ENCODE measurements at regions of chr1 and their contacts with region 1.

Region 1: DNA sequence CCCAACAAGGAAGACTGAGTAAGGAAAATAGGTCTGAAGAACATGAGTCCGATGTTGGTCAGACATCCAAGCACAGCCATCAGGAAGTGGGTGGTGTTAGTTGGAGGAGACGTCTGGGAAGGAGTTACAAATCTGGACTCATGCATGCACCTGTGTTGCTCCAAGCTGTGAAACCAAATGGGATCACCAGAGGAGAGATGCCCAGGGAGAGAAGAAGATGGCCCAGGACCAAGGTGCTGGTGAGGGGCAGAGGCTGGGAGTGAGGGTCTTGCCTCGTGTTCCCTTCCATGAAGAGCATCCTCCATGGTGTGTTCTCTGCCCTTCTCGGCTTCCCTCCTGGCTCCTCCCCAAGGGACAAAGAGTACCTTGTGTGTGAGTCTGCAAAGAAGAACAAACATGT is 405.6 kb downstream of the NPHP4 start:
- DNase-seq: no peak
- H3K4me3 ChIP-seq: no peak overlapping the region
- H3K27ac ChIP-seq: no peak overlapping the region
- H3K4me1 ChIP-seq: no peaks in the 10 kb centered on the region
- H3K27me3 ChIP-seq: peaks cover 0 to 16% of the 10 kb centered on the region in 2 donors
- CTCF ChIP-seq: no peak
- POLR2A ChIP-seq: no peak

Region 2: GRCh38 chr1:4298361-4299083 is 1288.1 kb before region 1 on chr1:
- intact Hi-C with region 1: loop called (anchors 5 kb)
- DNase-seq: no peak
- H3K4me3 ChIP-seq: no peak overlapping the region
- H3K27ac ChIP-seq: no peak overlapping the region
- H3K4me1 ChIP-seq: no peaks in the 10 kb centered on the region
- H3K27me3 ChIP-seq: no peaks in the 10 kb centered on the region
- CTCF ChIP-seq: no peak
- POLR2A ChIP-seq: no peak

Region 3: DNA sequence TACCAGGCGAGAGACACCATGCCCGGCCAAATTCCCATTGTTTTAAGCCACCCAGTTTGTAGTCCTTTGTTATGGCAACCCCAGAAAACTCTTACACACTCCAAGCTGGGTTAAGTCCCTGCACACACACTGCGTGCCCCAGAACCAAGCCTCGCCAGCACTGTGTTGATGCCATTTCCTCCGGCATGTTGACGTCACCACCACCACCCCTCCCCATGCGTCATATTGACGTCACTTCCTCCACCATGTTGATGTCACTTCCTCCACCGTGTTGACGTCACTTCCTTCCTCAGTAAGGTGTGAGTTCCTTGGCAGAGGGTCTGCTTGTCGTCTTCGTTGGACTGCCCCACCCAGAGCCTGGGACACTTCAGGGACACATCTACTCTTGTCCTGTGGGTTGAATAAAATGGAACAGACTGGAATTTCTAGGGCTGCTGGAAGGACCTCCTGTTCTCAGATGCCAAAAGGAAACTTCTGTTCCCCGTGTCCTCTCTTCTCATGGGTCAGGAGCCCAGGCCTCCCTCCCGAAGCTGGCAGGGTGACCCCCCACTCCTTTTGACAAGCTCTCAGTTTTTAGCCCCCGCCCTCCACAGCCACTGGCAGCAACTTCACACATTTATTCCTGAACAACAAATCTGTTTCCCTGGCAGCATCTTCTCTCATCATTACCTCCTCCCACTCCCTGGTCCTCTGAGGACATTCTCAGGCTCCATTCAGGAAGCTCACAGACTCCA is 237.7 kb before region 1 on chr1:
- intact Hi-C with region 1: no loop called
- DNase-seq: no peak
- H3K4me3 ChIP-seq: no peak overlapping the region
- H3K27ac ChIP-seq: no peak overlapping the region
- H3K4me1 ChIP-seq: no peaks in the 10 kb centered on the region
- H3K27me3 ChIP-seq: peaks cover 0 to 7% of the 10 kb centered on the region in 2 donors
- CTCF ChIP-seq: no peak
- POLR2A ChIP-seq: no peak

Region 4: DNA sequence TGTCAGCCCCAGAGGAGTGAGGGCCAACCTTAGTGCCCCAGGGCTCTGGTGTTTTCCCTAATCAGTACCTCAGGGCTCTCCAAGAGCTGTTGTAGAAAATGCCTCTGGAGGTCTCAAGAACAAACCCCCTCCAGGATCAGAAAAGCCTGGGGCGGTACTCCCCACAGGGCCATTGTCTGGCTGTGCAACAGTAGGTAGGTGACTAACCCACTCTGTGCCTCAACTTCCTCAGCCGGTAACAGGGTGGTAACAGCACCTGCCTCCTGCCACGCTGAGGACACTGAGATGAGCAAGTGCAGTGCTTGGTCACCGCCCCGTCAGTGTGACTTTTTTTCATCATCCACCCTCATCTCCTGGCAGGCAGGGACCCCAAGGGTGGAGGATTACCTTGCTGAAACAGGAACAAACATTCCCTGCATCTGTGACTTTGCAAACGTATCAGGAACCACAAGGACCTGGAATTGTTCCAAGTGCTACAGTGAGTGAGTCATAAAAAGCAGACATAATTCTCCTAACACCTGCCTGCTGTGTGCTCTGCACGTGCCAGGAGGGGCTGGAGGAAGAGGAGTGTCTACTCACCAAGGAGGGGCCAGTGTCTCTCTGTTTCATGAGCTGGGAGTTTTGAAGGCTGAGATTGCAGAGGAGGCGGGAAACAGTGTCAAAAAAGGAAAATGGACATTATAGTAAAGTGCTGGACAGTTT is 35.2 kb before region 1 on chr1:
- intact Hi-C with region 1: no loop called
- DNase-seq: no peak
- H3K4me3 ChIP-seq: no peak overlapping the region
- H3K27ac ChIP-seq: no peak overlapping the region
- H3K4me1 ChIP-seq: no peaks in the 10 kb centered on the region
- H3K27me3 ChIP-seq: no peaks in the 10 kb centered on the region
- CTCF ChIP-seq: no peak
- POLR2A ChIP-seq: no peak